ENCODE measurements at regions of chr5 and their contacts with region 1.

Region 1: DNA sequence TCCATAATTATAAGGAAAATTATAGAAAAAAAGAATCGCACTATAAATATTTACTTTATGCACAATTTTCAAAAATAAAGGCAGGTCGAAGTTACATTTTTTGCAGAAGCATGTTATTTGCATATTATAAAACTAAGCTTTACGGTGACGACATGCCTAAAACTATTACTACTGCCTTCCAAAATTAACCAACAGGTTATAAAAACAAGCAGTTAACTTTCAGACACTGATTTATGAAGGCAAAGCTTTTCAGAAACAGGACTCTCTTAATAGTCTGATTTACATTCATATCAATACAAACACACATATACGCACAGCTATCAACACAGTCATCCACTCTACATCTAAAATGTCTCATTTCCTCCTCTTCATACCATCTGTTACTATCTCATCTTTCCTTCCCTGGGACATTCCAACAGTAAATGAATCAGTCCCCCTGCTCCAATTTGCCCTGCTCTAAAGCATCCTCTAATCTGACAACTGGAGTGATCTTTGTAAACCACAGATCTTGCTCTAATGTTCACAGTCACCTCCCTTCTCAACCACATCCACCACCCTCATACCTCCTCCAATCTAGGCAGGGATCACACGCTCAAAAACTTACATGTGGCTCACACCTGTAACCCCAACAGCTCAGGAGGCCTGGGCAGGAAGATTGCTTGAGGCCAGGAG is 21.6 kb downstream of the FBXW11 start:
- DNase-seq: no peak
- ATAC-seq: no peak; a peak in 1 of 6 replicates
- H3K4me3 ChIP-seq: no peak overlapping the region
- H3K27ac ChIP-seq: no peak overlapping the region
- H3K4me1 ChIP-seq: peaks cover 3% of the 10 kb centered on the region; the same call in 1 of the 3 replicates
- CTCF ChIP-seq: no peak
- EP300 ChIP-seq: no peak
- POLR2A ChIP-seq: no peak
- RAD21 ChIP-seq: no peak

Region 2: GRCh38 chr5:171882118-171882517 is 102.8 kb before region 1 on chr5:
- CTCF ChIA-PET with region 1: no interaction called
- POLR2A ChIA-PET with region 1: no interaction called
- DNase-seq: no peak
- ATAC-seq: no peak
- H3K4me3 ChIP-seq: no peak overlapping the region
- H3K27ac ChIP-seq: no peak overlapping the region
- H3K4me1 ChIP-seq: no peaks in the 10 kb centered on the region
- CTCF ChIP-seq: no peak
- EP300 ChIP-seq: no peak
- POLR2A ChIP-seq: no peak
- RAD21 ChIP-seq: no peak

Region 3: DNA sequence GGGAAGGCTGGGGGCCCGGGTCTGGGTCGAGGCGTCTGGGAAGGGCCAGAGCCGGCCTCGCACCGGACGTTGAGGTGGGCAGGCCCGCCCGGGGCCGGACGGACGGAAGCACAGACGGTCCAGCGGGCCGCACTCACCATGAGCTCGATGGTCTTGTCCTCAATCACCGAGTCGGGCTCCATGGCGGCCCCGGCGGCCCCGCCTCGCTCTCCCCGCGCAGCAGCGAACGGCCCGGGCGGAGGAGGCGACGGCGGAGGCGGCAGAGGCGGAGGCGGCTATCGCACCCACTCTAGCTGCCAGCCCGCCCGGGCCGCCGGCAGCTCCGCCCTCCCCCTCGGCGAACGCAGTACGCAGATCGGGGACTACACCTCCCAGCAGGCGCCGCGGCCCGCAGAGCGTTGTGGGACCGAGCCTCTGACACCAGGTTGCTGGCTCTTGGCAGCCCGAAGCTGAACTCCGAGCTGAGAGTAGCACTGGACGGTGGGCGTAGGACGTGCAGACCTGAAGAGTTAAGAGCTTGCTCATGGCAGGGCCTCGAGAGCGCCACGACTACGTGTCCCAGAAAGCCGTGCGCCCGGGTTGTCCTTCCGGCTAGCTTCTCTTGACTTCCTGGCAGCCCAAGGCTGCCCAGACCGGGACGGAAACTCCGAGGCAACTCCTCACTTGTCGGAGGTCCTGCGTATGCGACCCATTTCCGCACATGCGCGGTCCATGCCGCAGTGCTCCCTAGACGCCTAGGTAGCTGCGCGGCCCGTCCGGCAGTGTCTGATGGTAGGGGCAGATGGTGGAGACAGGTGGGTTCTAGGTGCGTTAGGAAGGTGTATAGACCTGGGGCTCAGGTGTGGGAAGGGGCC is 21.7 kb after region 1 on chr5 and contains the start of gene FBXW11:
- CTCF ChIA-PET with region 1: interaction called, 4 read pairs
- POLR2A ChIA-PET with region 1: interaction called, 10 read pairs
- DNase-seq: peak; percentile 97
- ATAC-seq: peak; percentile 93 to 94
- H3K4me3 ChIP-seq: peak within 1 kb of the TSS; percentile 93
- H3K27ac ChIP-seq: peak within 1 kb of the TSS; percentile 94 to 98
- H3K4me1 ChIP-seq: peaks cover 30% of the 10 kb centered on the region
- CTCF ChIP-seq: no peak
- EP300 ChIP-seq: no peak
- POLR2A ChIP-seq: peak; percentile 99
- RAD21 ChIP-seq: no peak; a peak in 1 of 5 replicates
- polyA plus RNA-seq, gene FBXW11: 80.2 and 87.4 TPM in 2 replicates